Activated CD8-positive, alpha-beta T cell treated with anti-CD3 and anti-CD28 coated beads for 36 hours (primary cell): ENCODE measurements at regions of chr11 and their contacts with region 1.

Region 1: DNA sequence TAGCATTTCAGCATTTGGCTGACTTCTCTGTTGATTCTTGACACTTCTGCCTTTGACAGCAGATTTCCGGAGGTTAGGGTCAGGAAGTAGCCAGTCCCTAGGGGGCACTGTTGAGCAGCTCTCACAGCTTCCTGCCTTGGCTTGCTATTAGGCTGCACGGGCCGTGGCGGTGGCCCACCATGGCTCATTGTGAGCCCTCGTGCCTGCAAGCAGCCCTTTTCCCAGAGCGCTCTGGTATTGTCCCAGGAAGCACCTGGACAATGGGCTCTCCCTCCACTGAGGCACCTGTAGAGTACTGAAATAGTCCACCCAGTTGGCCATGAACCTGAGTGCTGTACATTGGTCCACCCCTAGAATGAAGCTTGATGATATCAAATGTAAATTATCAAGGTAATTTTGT is 100.2 kb upstream of the GAL start:
- DNase-seq: peak; percentile 80
- ATAC-seq: peak; percentile 75
- H3K4me3 Mint-ChIP-seq: no peak overlapping the region
- H3K27ac Mint-ChIP-seq: no peak overlapping the region
- H3K4me1 Mint-ChIP-seq: peaks cover 24% of the 10 kb centered on the region
- H3K27me3 Mint-ChIP-seq: no peaks in the 10 kb centered on the region
- CTCF ChIP-seq: peak; percentile 91

Region 2: GRCh38 chr11:68369756-68370155 is 214.3 kb before region 1 on chr11:
- CTCF ChIA-PET with region 1: no interaction called
- POLR2A ChIA-PET with region 1: no interaction called
- intact Hi-C with region 1: no loop called
- DNase-seq: no peak
- ATAC-seq: no peak
- H3K4me3 Mint-ChIP-seq: no peak overlapping the region
- H3K27ac Mint-ChIP-seq: no peak overlapping the region
- H3K4me1 Mint-ChIP-seq: no peaks in the 10 kb centered on the region
- H3K27me3 Mint-ChIP-seq: no peaks in the 10 kb centered on the region
- CTCF ChIP-seq: no peak

Region 3: GRCh38 chr11:68569357-68569756 is 14.7 kb before region 1 on chr11:
- CTCF ChIA-PET with region 1: interaction called, 60 read pairs
- POLR2A ChIA-PET with region 1: no interaction called
- intact Hi-C with region 1: no loop called
- DNase-seq: no peak
- ATAC-seq: peak; percentile 51
- H3K4me3 Mint-ChIP-seq: no peak overlapping the region
- H3K27ac Mint-ChIP-seq: no peak overlapping the region
- H3K4me1 Mint-ChIP-seq: peaks cover 39% of the 10 kb centered on the region
- H3K27me3 Mint-ChIP-seq: no peaks in the 10 kb centered on the region
- CTCF ChIP-seq: no peak

Region 4: DNA sequence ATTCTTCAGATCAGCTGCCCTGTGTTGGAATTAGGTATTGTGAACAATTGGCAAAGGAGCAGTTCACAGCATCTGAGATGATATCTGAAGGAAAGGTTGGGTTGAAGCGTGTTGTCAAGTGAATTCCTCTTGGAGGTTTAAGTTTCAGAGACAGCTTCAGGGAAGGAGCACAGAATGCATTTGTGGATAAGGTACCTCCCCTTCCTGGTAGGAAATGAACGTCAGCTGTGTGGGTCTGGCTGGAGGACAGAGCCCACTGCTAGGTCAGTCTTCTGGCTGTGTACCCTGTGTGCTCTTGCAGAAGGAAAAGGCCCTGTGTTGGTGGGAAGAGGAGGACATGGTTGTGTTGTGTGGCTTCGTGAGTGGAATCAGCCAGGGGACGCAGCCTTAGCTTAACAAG is 12.1 kb after region 1 on chr11:
- CTCF ChIA-PET with region 1: interaction called, 11 read pairs
- POLR2A ChIA-PET with region 1: no interaction called
- intact Hi-C with region 1: no loop called
- DNase-seq: no peak
- ATAC-seq: no peak
- H3K4me3 Mint-ChIP-seq: no peak overlapping the region
- H3K27ac Mint-ChIP-seq: no peak overlapping the region
- H3K4me1 Mint-ChIP-seq: no peaks in the 10 kb centered on the region
- H3K27me3 Mint-ChIP-seq: no peaks in the 10 kb centered on the region
- CTCF ChIP-seq: no peak